MCF 10A (cell line): ENCODE measurements at regions of chr5 and their contacts with region 1.

Region 1: DNA sequence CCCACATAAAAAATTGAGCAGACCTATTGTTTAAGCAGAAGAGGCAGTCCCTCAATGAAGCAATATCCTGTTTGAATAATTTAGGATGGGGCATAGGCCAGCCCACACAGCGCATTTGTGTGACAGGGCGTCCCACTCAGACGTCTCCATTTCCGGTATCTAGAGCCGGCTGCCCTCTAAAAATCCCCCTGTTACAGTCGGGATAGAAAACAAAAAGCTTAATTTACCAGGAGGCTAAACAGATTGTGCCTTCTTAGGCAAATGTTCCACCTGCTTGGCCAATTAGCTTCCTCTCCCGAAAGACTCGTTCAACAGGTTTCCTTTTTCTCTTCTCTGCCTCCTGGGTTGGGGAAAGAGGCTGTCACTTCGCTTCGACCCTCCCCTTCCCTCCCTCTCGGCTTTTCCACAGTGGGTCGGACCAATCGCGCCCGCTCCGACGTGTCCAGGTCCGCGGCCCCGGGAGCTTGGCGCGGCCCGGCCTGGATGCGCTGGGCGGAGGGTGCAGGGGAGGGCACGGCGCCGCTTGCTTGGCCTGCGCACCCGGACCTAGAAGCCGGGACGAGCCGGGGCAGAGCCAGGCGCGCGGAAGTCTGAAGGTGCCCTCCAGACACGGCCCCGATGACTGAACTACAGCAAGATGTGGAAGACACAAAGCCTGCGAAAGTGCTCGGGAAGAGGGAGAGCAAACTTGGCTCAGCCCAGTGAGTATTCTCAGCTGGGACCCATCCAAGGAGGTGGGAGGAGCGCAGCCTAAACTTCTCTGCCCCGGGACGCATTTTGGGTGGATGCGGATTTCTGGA is at the start of gene GRAMD2B:
- DNase-seq: peak; percentile 96
- H3K4me3 Mint-ChIP-seq: peak within 1 kb of the TSS; percentile 88
- H3K27ac Mint-ChIP-seq: peak within 1 kb of the TSS; percentile 90
- H3K4me1 Mint-ChIP-seq: peaks cover 26% of the 10 kb centered on the region
- H3K27me3 Mint-ChIP-seq: no peaks in the 10 kb centered on the region
- CTCF ChIP-seq: no peak
- total RNA-seq, gene GRAMD2B: 7.1 and 11.1 TPM in 2 replicates

Region 2: GRCh38 chr5:126280846-126281245 is 142.3 kb before region 1 on chr5:
- CTCF ChIA-PET with region 1: no interaction called
- POLR2A ChIA-PET with region 1: no interaction called
- intact Hi-C with region 1: no loop called
- DNase-seq: no peak
- H3K4me3 Mint-ChIP-seq: no peak overlapping the region
- H3K27ac Mint-ChIP-seq: no peak overlapping the region
- H3K4me1 Mint-ChIP-seq: no peaks in the 10 kb centered on the region
- H3K27me3 Mint-ChIP-seq: no peaks in the 10 kb centered on the region
- CTCF ChIP-seq: no peak

Region 3: DNA sequence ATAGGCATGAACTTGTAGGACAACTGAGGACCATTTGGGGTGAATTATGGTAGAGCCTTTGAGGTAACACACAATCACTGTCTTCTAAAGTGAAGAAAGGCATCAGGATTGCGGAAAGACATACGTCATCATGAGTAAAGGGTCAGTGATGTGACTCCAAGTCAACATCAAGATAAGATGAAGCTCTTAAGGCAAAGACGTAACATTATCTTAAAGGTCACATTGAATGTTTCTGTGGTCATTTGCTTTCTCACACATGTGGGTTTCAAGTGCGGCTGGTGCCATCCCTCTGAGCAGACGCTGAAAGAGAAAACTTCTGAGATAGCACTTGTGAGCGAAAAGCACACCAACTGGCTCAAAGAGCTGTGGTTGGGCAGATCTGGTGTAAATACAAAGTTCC is 63.3 kb before region 1 on chr5:
- CTCF ChIA-PET with region 1: interaction called, 17 read pairs
- POLR2A ChIA-PET with region 1: interaction called, 26 read pairs
- intact Hi-C with region 1: no loop called
- DNase-seq: no peak
- H3K4me3 Mint-ChIP-seq: no peak overlapping the region
- H3K27ac Mint-ChIP-seq: no peak overlapping the region
- H3K4me1 Mint-ChIP-seq: peaks cover 26% of the 10 kb centered on the region
- H3K27me3 Mint-ChIP-seq: no peaks in the 10 kb centered on the region
- CTCF ChIP-seq: no peak

Region 4: GRCh38 chr5:126384985-126385384 is 38.2 kb before region 1 on chr5:
- CTCF ChIA-PET with region 1: no interaction called
- POLR2A ChIA-PET with region 1: interaction called, 19 read pairs
- intact Hi-C with region 1: no loop called
- DNase-seq: peak; percentile 71
- H3K4me3 Mint-ChIP-seq: no peak overlapping the region
- H3K27ac Mint-ChIP-seq: peak overlapping the region; percentile 73
- H3K4me1 Mint-ChIP-seq: peaks cover 15% of the 10 kb centered on the region
- H3K27me3 Mint-ChIP-seq: no peaks in the 10 kb centered on the region
- CTCF ChIP-seq: no peak

Region 5: GRCh38 chr5:126402621-126403555 is 20.3 kb before region 1 on chr5:
- CTCF ChIA-PET with region 1: no interaction called
- POLR2A ChIA-PET with region 1: interaction called, 11 read pairs
- intact Hi-C with region 1: no loop called
- DNase-seq: no peak
- H3K4me3 Mint-ChIP-seq: no peak overlapping the region
- H3K27ac Mint-ChIP-seq: no peak overlapping the region
- H3K4me1 Mint-ChIP-seq: no peaks in the 10 kb centered on the region
- H3K27me3 Mint-ChIP-seq: no peaks in the 10 kb centered on the region
- CTCF ChIP-seq: no peak

Region 6: DNA sequence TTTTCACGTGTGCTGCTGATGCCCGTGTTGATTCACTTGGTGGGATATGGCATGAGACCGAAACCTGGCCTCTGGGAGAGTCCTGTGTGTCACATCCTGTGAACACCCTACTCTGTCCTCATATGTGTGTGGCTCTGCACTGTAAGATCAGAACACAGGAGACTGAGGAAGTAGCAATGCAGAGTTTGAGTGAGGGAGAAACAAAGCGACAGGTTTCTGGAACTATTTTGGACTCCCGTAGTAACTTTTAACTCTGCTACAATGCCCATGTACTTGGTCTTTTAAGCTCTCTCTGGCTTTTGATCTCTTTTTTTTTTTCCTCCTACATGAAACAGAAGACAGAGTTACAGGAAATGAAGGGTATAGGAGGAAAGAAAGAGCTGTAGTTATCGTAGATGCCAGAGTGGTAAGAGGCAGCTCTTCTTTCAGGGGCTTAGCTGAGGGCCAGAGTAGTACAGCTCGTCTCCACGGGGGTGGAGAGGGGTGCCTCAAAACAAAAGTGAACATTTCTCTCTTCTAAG is 26.6 kb after region 1 on chr5:
- CTCF ChIA-PET with region 1: interaction called, 4 read pairs
- POLR2A ChIA-PET with region 1: interaction called, 110 read pairs
- intact Hi-C with region 1: loop called (anchors 1 kb)
- DNase-seq: peak; percentile 92
- H3K4me3 Mint-ChIP-seq: peak overlapping the region; percentile 68
- H3K27ac Mint-ChIP-seq: peak overlapping the region; percentile 99
- H3K4me1 Mint-ChIP-seq: peaks cover 62% of the 10 kb centered on the region
- H3K27me3 Mint-ChIP-seq: no peaks in the 10 kb centered on the region
- CTCF ChIP-seq: no peak

Region 7: DNA sequence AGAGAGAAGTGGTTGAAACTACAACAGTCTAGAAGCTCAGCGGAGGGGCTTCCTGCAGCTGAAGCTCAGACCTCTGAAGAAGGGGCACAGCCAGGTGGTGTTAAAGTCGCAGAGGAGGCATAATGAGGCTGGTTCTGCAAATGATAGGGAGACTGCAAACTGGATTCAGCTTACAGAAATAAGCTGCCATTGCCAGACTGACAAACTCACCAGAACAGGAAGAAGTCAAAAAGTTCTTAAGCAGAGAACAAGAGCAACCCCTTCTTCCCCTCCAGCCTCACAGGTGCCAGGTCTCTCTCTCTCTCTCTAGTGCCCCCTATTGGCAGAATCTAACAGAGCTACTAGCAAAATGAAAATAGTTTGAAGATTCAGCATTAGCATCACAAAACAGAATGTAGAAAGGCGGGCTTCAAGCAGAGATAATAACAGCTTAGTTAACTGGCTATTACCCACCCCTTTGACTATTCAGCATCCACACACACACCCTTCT is 76.7 kb after region 1 on chr5:
- CTCF ChIA-PET with region 1: interaction called, 3 read pairs
- POLR2A ChIA-PET with region 1: interaction called, 7 read pairs
- intact Hi-C with region 1: loop called (anchors 5 kb)
- DNase-seq: peak; percentile 62
- H3K4me3 Mint-ChIP-seq: no peak overlapping the region
- H3K27ac Mint-ChIP-seq: no peak overlapping the region
- H3K4me1 Mint-ChIP-seq: peaks cover 28% of the 10 kb centered on the region
- H3K27me3 Mint-ChIP-seq: no peaks in the 10 kb centered on the region
- CTCF ChIP-seq: peak; percentile 51

Region 8: DNA sequence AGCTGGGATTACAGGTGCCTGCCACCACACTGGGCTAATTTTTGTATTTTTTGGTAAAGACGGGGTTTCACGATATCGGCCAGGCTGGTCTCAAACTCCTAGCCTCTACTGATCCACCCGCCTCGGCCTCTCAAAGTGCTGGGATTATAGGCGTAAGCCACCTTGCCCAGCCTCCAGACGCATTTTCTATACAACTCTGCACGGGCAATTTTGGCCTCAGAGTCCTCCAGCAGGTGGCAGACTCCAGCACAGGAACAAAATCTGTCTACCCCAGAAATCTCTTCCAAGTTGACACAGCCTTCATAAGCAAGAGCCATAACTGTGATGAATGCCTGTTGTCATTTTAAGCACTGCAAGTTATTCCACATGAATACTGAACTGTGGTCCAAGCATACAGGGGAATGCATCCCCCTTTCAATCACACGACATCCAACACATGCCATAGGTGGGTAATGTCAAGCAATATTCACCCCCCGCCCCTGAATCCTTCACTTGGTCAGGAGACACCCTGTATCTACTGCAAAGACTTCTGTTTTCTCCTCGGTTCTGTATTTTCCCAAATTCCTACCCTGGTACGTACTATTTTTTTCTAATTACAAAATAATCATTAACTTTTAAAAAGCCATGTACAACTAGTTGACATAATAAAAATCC is 121.0 kb after region 1 on chr5:
- CTCF ChIA-PET with region 1: interaction called, 3 read pairs
- POLR2A ChIA-PET with region 1: interaction called, 7 read pairs
- intact Hi-C with region 1: loop called (anchors 1 kb)
- DNase-seq: peak; percentile 60
- H3K4me3 Mint-ChIP-seq: no peak overlapping the region
- H3K27ac Mint-ChIP-seq: peak overlapping the region; percentile 33
- H3K4me1 Mint-ChIP-seq: no peaks in the 10 kb centered on the region
- H3K27me3 Mint-ChIP-seq: no peaks in the 10 kb centered on the region
- CTCF ChIP-seq: peak; percentile 63